ENCODE measurements at regions of chr14 and their contacts with region 1.

Region 1: GRCh38 chr14:24806061-24806678 is 172.2 kb upstream of the GZMB start:
- DNase-seq: peak; percentile 60 to 86 (median 79)
- ATAC-seq: peak; percentile 59 to 61
- H3K4me3 ChIP-seq: no peak overlapping the region
- H3K27ac ChIP-seq: no peak overlapping the region
- H3K4me1 ChIP-seq: peaks cover 5% of the 10 kb centered on the region
- H3K27me3 ChIP-seq: no peaks in the 10 kb centered on the region

Region 2: DNA sequence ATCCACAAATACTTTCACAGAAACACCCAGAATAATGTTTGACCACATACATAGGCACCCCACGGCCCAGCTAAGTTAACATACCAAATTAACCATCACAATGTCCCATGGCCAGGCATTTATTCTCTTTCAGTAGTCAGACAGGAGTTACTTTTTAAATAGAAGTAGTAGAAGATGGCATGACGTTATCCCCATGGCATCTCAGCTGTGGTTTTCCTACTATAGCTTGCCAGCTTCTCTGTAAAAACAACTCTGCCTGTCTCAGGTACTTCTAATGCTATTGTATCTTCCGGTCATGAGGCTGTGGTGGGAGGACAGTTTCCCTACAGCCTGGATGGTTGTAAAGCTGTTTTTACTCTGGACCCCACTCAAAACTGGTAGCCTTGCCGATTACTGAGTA is 249.4 kb before region 1 on chr14:
- intact Hi-C with region 1: no loop called
- DNase-seq: no peak
- ATAC-seq: no peak
- H3K4me3 ChIP-seq: no peak overlapping the region
- H3K27ac ChIP-seq: no peak overlapping the region
- H3K4me1 ChIP-seq: no peaks in the 10 kb centered on the region
- H3K27me3 ChIP-seq: no peaks in the 10 kb centered on the region

Region 3: GRCh38 chr14:24710403-24711112 is 95.6 kb before region 1 on chr14:
- intact Hi-C with region 1: no loop called
- DNase-seq: peak in 2 of 3 donors; percentile 25 to 67
- ATAC-seq: peak; percentile 55 to 56
- H3K4me3 ChIP-seq: peak overlapping the region; percentile 28
- H3K27ac ChIP-seq: no peak overlapping the region
- H3K4me1 ChIP-seq: no peaks in the 10 kb centered on the region
- H3K27me3 ChIP-seq: no peaks in the 10 kb centered on the region

Region 4: GRCh38 chr14:24734878-24735500 is 71.2 kb before region 1 on chr14:
- intact Hi-C with region 1: loop called in 1 of 4 experiments (anchors 10 kb)
- DNase-seq: peak in 1 of 3 donors; percentile 19
- ATAC-seq: peak; percentile 69 to 73
- H3K4me3 ChIP-seq: no peak overlapping the region
- H3K27ac ChIP-seq: no peak overlapping the region
- H3K4me1 ChIP-seq: no peaks in the 10 kb centered on the region
- H3K27me3 ChIP-seq: no peaks in the 10 kb centered on the region

Region 5: GRCh38 chr14:25042362-25043299 is 236.5 kb after region 1 on chr14:
- intact Hi-C with region 1: loop called (anchors 5 to 10 kb)
- DNase-seq: no peak
- ATAC-seq: peak; percentile 40 to 50
- H3K4me3 ChIP-seq: no peak overlapping the region
- H3K27ac ChIP-seq: no peak overlapping the region
- H3K4me1 ChIP-seq: no peaks in the 10 kb centered on the region
- H3K27me3 ChIP-seq: no peaks in the 10 kb centered on the region

Region 6: GRCh38 chr14:25132732-25133422 is 326.7 kb after region 1 on chr14:
- intact Hi-C with region 1: loop called (anchors 5 to 10 kb)
- DNase-seq: peak; percentile 63 to 78 (median 68)
- ATAC-seq: peak; percentile 94 to 96
- H3K4me3 ChIP-seq: no peak overlapping the region
- H3K27ac ChIP-seq: no peak overlapping the region
- H3K4me1 ChIP-seq: no peaks in the 10 kb centered on the region
- H3K27me3 ChIP-seq: no peaks in the 10 kb centered on the region

Region 7: GRCh38 chr14:25150934-25151790 is 345.0 kb after region 1 on chr14:
- intact Hi-C with region 1: loop called in 3 of 4 experiments (anchors 5 kb)
- DNase-seq: no peak
- ATAC-seq: no peak
- H3K4me3 ChIP-seq: no peak overlapping the region
- H3K27ac ChIP-seq: no peak overlapping the region
- H3K4me1 ChIP-seq: no peaks in the 10 kb centered on the region
- H3K27me3 ChIP-seq: no peaks in the 10 kb centered on the region

Measured in right cardiac atrium (tissue), 5 donors.